Dorsolateral prefrontal cortex (tissue), 120 donors: ENCODE measurements at regions of chr1 and their contacts with region 1.

Region 1: GRCh38 chr1:218694636-218695035 is 349.5 kb downstream of the TGFB2 start:
- DNase-seq: peak in 5 of 10 donors; percentile 4 to 43 (median 35)
- H3K4me3 ChIP-seq: no peak overlapping the region
- H3K27ac ChIP-seq: peak overlapping the region in 9 of 59 donors; percentile 1 to 46 (median 22)
- H3K27me3 ChIP-seq: no peaks in the 10 kb centered on the region
- CTCF ChIP-seq: no peak

Region 2: DNA sequence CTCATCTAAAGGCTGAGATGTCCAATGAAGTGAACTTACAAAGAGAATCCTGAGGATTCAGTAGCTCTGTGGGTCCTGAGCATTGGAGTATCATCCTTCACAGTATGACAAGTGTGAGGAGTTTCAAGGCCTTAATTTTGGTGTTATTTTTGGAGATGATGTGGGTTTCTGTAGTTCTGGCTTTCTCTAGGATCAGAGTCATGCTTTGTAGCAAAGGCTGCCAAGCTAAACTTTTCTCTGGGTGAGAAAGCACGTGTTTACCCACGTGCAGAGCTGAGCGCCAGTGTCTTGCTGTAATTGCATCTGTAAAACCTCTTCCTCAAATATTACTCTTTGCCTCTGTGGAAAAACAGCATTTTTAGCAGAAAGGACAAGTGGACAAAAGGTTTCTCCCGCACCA is 91.3 kb after region 1 on chr1:
- intact Hi-C with region 1: loop called in 1 of 2 experiments (anchors 10 kb)
- DNase-seq: peak in 6 of 10 donors; percentile 28 to 52 (median 48)
- H3K4me3 ChIP-seq: no peak overlapping the region
- H3K27ac ChIP-seq: peak overlapping the region in 3 of 59 donors; percentile 8 to 26 (median 21)
- H3K27me3 ChIP-seq: no peaks in the 10 kb centered on the region
- CTCF ChIP-seq: no peak